CD14-positive monocyte (primary cell): ENCODE measurements at regions of chr5 and their contacts with region 1.

Region 1: DNA sequence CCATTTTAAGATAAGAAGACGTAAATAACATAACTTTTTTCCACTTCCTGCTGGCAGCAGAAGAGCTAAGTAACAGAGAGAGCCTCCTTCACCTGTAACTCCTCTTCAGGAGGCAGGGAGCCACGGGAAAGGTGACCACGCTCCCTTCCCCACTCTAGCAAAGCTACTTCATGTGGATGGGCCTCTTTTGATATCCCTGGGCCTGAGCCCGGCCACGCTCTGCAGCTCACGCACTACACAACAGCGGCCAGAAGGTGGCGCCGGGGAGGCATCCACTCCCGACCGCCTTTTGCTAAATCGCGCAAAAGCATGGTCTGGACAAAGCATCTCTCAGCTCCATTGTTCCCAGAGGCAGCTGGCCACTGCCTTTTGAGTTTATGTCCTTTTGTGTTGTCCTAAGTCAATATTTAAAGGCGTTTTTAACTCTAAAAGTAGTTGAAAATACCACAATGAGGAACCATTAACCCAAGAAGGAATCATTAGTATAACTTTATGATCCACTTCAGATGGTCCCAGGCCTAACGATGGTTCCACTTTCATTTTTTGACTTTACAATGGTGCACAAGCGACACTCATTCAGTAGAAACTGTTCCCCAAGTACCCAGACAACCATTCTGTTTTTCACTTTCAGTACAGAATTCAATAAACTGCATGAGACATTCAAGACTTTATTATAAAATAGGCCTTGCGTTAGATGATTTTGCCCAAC is 23.6 kb downstream of the CMBL start:
- DNase-seq: peak; percentile 61 to 72 (median 71)
- H3K4me3 ChIP-seq: no peak overlapping the region
- H3K4me3 Mint-ChIP-seq: no peak overlapping the region
- H3K27ac ChIP-seq: no peak overlapping the region
- H3K27ac Mint-ChIP-seq: peak overlapping the region in 1 of 7 donors; percentile 45
- H3K4me1 ChIP-seq: no peaks in the 10 kb centered on the region
- H3K4me1 Mint-ChIP-seq: peaks cover 3% of the 10 kb centered on the region
- H3K27me3 ChIP-seq: no peaks in the 10 kb centered on the region
- H3K27me3 Mint-ChIP-seq: peaks cover 1 to 2% (median 1%) of the 10 kb centered on the region in 3 donors
- CTCF ChIP-seq: peak; percentile 89

Region 2: DNA sequence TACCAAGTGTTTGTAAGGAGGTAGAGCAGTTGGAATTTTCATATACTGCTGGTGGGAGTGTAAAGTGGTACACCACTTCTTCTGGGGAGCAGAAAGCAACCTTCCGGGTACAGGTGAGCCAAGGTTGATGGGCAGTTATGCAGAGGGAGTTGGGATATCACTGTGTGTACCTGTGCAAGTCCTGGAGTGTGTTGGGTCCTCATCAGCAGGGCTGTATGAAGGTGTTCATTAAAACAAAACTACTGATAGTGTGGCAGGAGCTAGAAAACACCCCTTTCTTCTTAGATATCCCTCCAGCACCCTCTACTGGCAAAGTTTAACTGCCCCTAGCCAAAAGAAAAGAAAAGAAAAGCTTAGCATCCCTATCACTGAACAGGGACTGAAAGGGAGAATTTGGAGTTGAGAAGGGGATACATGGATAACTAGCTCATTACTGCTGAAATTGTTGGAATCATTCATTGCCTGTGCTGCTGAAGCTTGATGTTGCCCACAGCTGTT is 80.2 kb after region 1 on chr5:
- intact Hi-C with region 1: loop called in 1 of 2 experiments (anchors 5 kb)
- DNase-seq: peak in 1 of 3 donors; percentile 24
- H3K4me3 ChIP-seq: no peak overlapping the region
- H3K4me3 Mint-ChIP-seq: no peak overlapping the region
- H3K27ac ChIP-seq: no peak overlapping the region
- H3K27ac Mint-ChIP-seq: peak overlapping the region in 3 of 7 donors; percentile 38 to 79 (median 52)
- H3K4me1 ChIP-seq: peaks cover 19 to 24% of the 10 kb centered on the region in 2 donors
- H3K4me1 Mint-ChIP-seq: peaks cover 52% of the 10 kb centered on the region
- H3K27me3 ChIP-seq: no peaks in the 10 kb centered on the region
- H3K27me3 Mint-ChIP-seq: peaks cover 0 to 1% (median 0%) of the 10 kb centered on the region in 3 donors
- CTCF ChIP-seq: peak; percentile 42